ENCODE measurements at regions of chr3 and their contacts with region 1.

Region 1: DNA sequence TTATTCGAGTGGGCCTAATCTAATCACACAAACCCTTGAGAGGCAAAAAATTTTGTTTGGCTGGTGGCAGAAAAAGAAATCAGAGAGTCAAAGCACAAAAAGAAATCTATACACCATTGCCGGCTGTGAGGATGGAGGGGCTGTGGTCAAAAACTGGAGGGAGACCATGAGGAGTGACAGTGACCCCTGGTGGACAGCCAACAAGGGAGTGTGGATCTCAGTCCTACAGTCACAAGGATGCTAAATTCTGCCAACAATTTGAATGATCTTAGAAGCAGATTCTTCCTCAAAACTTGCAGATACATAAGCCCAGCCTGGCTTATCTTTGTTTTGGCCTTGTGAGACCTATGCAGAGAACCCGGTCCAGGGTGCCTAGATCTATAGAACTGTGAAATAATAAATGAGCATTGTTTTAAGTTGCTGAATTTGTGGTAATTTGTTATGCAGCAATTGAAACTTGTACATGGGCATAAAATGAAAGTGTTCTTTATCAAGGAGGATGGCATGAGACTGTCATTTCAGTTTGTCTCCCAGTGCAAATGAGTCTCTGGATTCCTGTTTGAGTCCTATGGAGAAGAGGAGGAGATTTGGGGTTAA is 103.0 kb upstream of the ARHGEF26 start:
- H3K4me3 Mint-ChIP-seq: no peak overlapping the region
- H3K27ac Mint-ChIP-seq: no peak overlapping the region
- H3K4me1 Mint-ChIP-seq: no peaks in the 10 kb centered on the region
- H3K27me3 Mint-ChIP-seq: no peaks in the 10 kb centered on the region

Region 2: GRCh38 chr3:153783106-153783505 is 235.1 kb before region 1 on chr3:
- intact Hi-C with region 1: loop called (anchors 10 kb)
- H3K4me3 Mint-ChIP-seq: no peak overlapping the region
- H3K27ac Mint-ChIP-seq: no peak overlapping the region
- H3K4me1 Mint-ChIP-seq: no peaks in the 10 kb centered on the region
- H3K27me3 Mint-ChIP-seq: peaks cover 2% of the 10 kb centered on the region

Measured in dendritic cell treated with granulocyte-macrophage colony-stimulating factor and Interleukin-4, amounts not matched to agents 40 ng/mL and 50 ng/mL, for 4 days (primary cell).